Aorta (tissue), 5 donors: ENCODE measurements at regions of chr3 and their contacts with region 1.

Region 1: DNA sequence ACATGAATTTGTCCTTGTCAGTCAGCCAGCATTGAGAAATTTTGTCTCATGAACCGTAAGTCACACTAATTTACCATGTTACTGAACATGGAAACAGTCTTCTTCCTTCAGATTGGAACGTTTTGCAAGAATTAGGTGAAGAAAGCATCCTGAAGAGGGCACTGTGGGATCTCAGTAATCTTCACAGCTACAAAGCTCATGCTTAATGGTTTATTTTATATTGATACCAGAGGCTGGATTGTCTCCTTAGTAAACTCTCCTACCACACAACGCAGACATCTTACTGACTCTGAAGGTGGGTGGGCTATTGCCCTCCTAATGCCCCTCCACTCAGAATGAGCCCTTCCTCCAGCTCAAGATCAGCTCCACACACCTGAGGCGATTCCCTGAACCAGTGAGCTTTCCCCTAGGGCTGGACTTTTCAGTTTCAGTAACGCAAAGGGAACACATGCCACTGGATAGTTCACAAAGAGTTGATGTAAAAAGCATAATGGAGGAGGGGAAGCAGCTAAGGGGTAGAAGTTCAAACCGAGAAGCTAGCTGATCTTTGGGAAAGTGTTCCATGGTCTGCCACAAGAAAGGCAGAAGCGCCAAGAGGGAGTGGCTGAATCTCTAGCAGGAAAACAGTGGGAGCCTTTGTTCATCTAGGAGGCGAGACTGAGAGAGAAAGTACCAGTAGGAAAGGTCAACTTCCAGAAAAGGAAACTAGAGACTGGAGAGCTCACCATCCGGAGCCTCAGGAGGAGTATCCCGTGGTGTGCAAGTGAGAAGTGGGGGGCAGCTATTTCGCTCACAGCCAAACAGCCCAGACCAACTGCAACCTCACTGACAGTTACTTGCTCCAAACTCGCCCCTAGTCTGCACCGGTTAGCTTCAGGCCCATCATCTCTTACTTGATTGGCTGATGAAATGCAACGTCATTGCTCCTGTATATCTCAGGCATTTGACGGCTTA is at the start of gene SLC9C1:
- DNase-seq: no peak
- ATAC-seq: peak; percentile 90
- H3K4me3 ChIP-seq: peak within 1 kb of the TSS; percentile 68 to 71
- H3K27ac ChIP-seq: peak within 1 kb of the TSS; percentile 30 to 49
- H3K4me1 ChIP-seq: no peaks in the 10 kb centered on the region
- H3K27me3 ChIP-seq: no peaks in the 10 kb centered on the region
- total RNA-seq, gene SLC9C1: 0.29 to 0.81 TPM

Region 2: GRCh38 chr3:112519424-112520001 is 225.9 kb after region 1 on chr3:
- intact Hi-C with region 1: loop called in 1 of 2 experiments (anchors 1 kb)
- DNase-seq: no peak
- ATAC-seq: peak; percentile 88
- H3K4me3 ChIP-seq: no peak overlapping the region
- H3K27ac ChIP-seq: no peak overlapping the region
- H3K4me1 ChIP-seq: no peaks in the 10 kb centered on the region
- H3K27me3 ChIP-seq: no peaks in the 10 kb centered on the region

Region 3: GRCh38 chr3:112605285-112605684 is 311.6 kb after region 1 on chr3:
- intact Hi-C with region 1: no loop called
- DNase-seq: no peak
- ATAC-seq: peak; percentile 76
- H3K4me3 ChIP-seq: no peak overlapping the region
- H3K27ac ChIP-seq: no peak overlapping the region
- H3K4me1 ChIP-seq: no peaks in the 10 kb centered on the region
- H3K27me3 ChIP-seq: no peaks in the 10 kb centered on the region

Region 4: GRCh38 chr3:112984485-112984884 is 690.8 kb after region 1 on chr3:
- intact Hi-C with region 1: loop called in 1 of 2 experiments (anchors 10 kb)
- DNase-seq: no peak
- ATAC-seq: no peak
- H3K4me3 ChIP-seq: no peak overlapping the region
- H3K27ac ChIP-seq: no peak overlapping the region
- H3K4me1 ChIP-seq: no peaks in the 10 kb centered on the region
- H3K27me3 ChIP-seq: no peaks in the 10 kb centered on the region